Heart left ventricle (tissue), 16 donors: ENCODE measurements at regions of chr11 and their contacts with region 1.

Region 1: GRCh38 chr11:59135648-59136461 is 6.8 kb upstream of the FAM111A start:
- DNase-seq: peak; percentile 73 to 91 (median 78)
- ATAC-seq: peak in 3 of 4 donors; percentile 93 to 96 (median 93)
- H3K4me3 ChIP-seq: no peak overlapping the region
- H3K27ac ChIP-seq: no peak overlapping the region
- H3K4me1 ChIP-seq: peaks cover 0 to 7% (median 0%) of the 10 kb centered on the region in 12 donors
- H3K27me3 ChIP-seq: no peaks in the 10 kb centered on the region
- CTCF ChIP-seq: peak; percentile 91 to 99 (median 96)
- POLR2A ChIP-seq: no peak

Region 2: DNA sequence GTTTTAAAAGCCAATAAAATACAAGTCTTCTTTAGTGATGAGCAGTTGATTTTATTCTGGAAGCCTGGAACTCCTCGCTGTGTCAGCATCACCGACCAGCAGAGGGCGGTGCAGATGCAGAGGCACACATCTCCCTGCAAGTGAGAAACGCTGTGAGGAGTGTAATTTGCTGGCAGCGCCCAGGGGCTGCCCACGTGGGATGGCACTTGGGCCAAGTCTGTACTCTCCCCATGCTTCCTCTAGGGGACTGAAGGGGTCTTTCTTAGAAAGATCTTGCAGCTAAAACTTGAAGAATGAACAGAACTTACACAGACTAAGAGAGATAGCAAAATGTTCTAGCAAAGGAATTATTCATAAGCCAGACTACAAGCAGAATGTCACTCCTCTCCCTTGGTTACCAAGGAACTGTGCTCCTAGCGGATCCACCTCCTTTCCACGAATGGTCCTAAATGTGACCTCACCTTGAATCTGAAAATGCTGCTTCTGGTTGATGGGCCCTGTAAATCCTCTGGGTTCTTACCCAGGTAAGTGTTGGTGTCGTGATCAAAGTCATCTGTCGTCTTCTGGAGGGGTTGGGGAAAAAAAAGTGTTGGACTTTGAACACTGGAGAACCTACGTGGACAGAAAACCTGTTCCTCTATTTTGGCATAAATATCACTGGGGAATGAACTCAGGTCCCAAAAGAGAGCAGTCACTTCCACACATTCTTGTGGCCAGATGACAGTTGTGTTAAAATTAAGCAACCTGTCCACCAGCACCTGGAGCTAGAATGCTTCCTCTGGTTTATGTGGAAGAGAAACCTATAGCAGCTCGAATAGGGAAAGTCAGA is 481.6 kb before region 1 on chr11:
- intact Hi-C with region 1: loop called in 3 of 10 experiments (anchors 10 kb)
- DNase-seq: peak; percentile 70 to 89 (median 78)
- ATAC-seq: peak; percentile 79 to 97 (median 92)
- H3K4me3 ChIP-seq: no peak overlapping the region
- H3K27ac ChIP-seq: no peak overlapping the region
- H3K4me1 ChIP-seq: peaks cover 0 to 21% (median 4%) of the 10 kb centered on the region in 12 donors
- H3K27me3 ChIP-seq: no peaks in the 10 kb centered on the region
- CTCF ChIP-seq: peak; percentile 75 to 95 (median 88)
- POLR2A ChIP-seq: no peak

Region 3: DNA sequence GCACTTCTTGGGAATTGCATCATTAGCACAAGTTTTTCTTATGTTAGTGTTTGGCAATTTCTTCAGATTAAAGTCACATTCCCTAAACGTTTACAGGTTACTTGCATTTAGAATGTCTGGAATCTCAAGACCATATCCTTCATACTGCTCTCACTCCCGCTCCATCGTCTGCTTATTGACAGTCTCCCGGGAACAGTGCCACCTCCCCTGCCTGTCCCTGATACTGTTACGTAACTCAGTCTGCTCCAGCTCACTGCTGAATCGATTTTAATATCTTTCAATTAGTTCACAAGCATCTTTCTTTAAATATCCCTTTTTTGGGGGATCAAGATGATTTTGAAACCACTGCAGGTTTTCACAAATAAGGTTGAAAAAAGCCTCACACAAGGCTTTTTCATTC is 339.5 kb before region 1 on chr11:
- intact Hi-C with region 1: loop called in 1 of 10 experiments (anchors 10 kb)
- DNase-seq: no peak
- ATAC-seq: no peak
- H3K4me3 ChIP-seq: no peak overlapping the region
- H3K27ac ChIP-seq: no peak overlapping the region
- H3K4me1 ChIP-seq: no peaks in the 10 kb centered on the region
- H3K27me3 ChIP-seq: peaks cover 0 to 10% (median 0%) of the 10 kb centered on the region in 9 donors
- CTCF ChIP-seq: no peak
- POLR2A ChIP-seq: no peak

Region 4: DNA sequence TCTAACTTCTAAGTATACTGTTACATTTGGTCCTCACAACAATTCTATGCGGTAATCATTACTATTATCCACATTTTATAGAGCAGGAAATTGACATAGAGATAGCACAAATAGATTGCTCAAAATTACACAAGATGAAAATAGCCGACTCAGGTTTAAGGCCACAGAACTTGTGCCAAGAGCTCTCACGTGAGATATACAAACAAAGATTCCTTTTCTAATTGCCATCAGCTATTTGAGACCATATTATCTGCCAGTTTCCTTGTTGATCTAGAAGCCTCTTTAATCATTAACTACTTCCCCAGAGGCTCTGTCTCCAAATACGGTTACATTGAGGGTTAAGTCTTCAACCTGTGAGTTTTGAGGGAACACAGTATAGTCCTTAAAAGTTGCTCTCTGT is 110.8 kb before region 1 on chr11:
- intact Hi-C with region 1: no loop called
- DNase-seq: no peak
- ATAC-seq: no peak
- H3K4me3 ChIP-seq: no peak overlapping the region
- H3K27ac ChIP-seq: no peak overlapping the region
- H3K4me1 ChIP-seq: no peaks in the 10 kb centered on the region
- H3K27me3 ChIP-seq: no peaks in the 10 kb centered on the region
- CTCF ChIP-seq: no peak
- POLR2A ChIP-seq: no peak

Region 5: DNA sequence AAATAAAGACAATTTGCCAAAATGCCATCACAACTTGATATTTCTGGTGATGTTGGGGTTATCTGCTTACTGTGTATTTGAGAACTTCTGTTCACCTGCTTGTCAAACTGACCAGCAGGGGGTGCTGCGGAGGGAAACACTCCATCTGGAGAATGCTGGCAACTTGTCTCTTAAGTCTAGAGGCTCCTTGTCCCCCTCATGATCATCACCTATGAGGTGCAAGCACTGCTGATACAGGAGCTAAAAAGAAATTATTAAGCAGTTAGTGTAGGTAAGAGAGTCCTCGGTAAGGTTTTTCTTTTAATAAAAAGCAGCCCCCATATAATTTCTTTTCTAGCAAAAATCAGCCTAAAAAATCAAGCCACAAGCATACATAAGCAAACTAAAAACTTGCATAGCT is 82.5 kb before region 1 on chr11:
- intact Hi-C with region 1: loop called in 5 of 10 experiments (anchors 2 to 10 kb)
- DNase-seq: peak; percentile 34 to 68 (median 43)
- ATAC-seq: no peak
- H3K4me3 ChIP-seq: no peak overlapping the region
- H3K27ac ChIP-seq: no peak overlapping the region
- H3K4me1 ChIP-seq: peaks cover 0 to 7% (median 0%) of the 10 kb centered on the region in 12 donors
- H3K27me3 ChIP-seq: peaks cover 0 to 29% (median under 1%) of the 10 kb centered on the region in 9 donors
- CTCF ChIP-seq: peak; percentile 40 to 70 (median 60)
- POLR2A ChIP-seq: no peak

Region 6: DNA sequence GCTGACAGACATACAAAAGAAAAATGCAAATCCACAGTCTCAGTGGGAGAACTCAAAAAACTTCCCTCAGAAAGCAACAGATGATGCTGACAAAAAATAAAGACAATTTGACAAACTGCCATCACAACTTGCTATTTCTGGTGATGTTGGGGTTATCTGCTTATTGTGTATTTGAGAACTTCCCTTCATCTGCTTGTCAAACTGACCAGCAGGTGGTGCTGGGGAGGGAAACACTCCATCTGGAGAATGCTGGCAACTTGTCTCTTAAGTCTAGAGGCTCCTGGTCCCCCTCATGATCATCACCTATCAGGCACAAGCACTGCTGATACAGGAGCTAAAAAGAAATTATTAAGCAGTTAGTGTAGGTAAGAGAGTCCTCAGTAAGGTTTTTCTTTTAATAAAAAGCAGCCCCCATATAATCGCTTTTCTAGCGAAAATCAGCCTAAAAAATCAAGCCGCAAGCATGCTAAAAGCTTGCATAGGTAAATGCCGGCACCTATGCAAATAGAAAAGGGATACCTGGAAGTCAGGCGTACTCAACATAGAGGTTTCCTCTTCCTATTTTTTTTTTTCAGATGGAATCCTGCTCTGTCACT is 38.6 kb before region 1 on chr11:
- intact Hi-C with region 1: loop called in 5 of 10 experiments (anchors 2 to 5 kb)
- DNase-seq: peak in 3 of 5 donors; percentile 42 to 54 (median 45)
- ATAC-seq: no peak
- H3K4me3 ChIP-seq: no peak overlapping the region
- H3K27ac ChIP-seq: no peak overlapping the region
- H3K4me1 ChIP-seq: peaks cover 0 to 6% (median 0%) of the 10 kb centered on the region in 12 donors
- H3K27me3 ChIP-seq: peaks cover 0 to 38% (median 11%) of the 10 kb centered on the region in 9 donors
- CTCF ChIP-seq: peak; percentile 40 to 73 (median 60)
- POLR2A ChIP-seq: no peak

Region 7: DNA sequence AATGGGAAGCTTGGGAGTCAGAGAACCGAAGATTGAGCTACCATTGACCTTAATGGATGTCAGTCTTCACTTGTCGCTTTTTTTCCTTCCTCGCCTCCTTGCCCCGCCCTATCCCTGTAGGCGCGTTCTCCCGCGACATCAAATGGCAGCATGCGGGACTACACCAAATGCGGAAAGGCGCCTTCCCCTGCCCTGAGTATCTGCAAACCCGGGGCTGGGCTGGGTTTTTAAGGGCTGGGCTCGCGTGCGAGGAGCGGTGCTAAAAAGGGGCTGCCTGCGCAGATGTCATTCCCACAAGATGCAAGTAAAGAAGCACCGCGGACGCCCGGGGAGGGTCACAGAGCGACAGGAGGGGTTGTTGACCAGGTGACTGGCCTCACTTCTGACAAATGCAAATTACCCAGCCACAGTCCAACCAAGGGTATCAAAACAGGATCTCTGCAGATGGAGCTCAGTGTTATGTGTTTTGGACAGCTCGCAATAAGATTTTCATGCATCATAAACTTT is 33.5 kb before region 1 on chr11:
- intact Hi-C with region 1: loop called in 5 of 10 experiments (anchors 2 to 5 kb)
- DNase-seq: peak; percentile 22 to 68 (median 38)
- ATAC-seq: peak in 1 of 4 donors; percentile 44
- H3K4me3 ChIP-seq: peak overlapping the region in 9 of 12 donors; percentile 1 to 54 (median 17)
- H3K27ac ChIP-seq: no peak overlapping the region
- H3K4me1 ChIP-seq: peaks cover 0 to 17% (median 6%) of the 10 kb centered on the region in 12 donors
- H3K27me3 ChIP-seq: peaks cover 0 to 43% (median 19%) of the 10 kb centered on the region in 9 donors
- CTCF ChIP-seq: peak in 7 of 12 donors; percentile 7 to 28 (median 19)
- POLR2A ChIP-seq: no peak